Mammary epithelial cell (primary cell): ENCODE measurements at regions of chr14 and their contacts with region 1.

Region 1: GRCh38 chr14:92783816-92784431 is 10.2 kb upstream of the GOLGA5 start:
- DNase-seq: peak; percentile 50
- H3K4me3 ChIP-seq: no peak overlapping the region
- H3K27ac ChIP-seq: no peak overlapping the region
- H3K4me1 ChIP-seq: peaks cover 19% of the 10 kb centered on the region
- H3K27me3 ChIP-seq: no peaks in the 10 kb centered on the region
- CTCF ChIP-seq: peak; percentile 41 to 57

Region 2: GRCh38 chr14:92686900-92687444 is 97.0 kb before region 1 on chr14:
- CTCF ChIA-PET with region 1: no interaction called
- dilution Hi-C with region 1: no loop called
- in situ Hi-C with region 1: no loop called
- intact Hi-C with region 1: loop called (anchors 1 kb)
- DNase-seq: peak; percentile 51
- H3K4me3 ChIP-seq: no peak overlapping the region
- H3K27ac ChIP-seq: no peak overlapping the region
- H3K4me1 ChIP-seq: no peaks in the 10 kb centered on the region
- H3K27me3 ChIP-seq: no peaks in the 10 kb centered on the region
- CTCF ChIP-seq: peak; percentile 59 to 81

Region 3: GRCh38 chr14:92704036-92704804 is 79.7 kb before region 1 on chr14:
- CTCF ChIA-PET with region 1: no interaction called
- dilution Hi-C with region 1: loop called (anchors 5 kb)
- in situ Hi-C with region 1: no loop called
- intact Hi-C with region 1: no loop called
- DNase-seq: no peak
- H3K4me3 ChIP-seq: no peak overlapping the region
- H3K27ac ChIP-seq: no peak overlapping the region
- H3K4me1 ChIP-seq: peaks cover 6% of the 10 kb centered on the region
- H3K27me3 ChIP-seq: no peaks in the 10 kb centered on the region
- CTCF ChIP-seq: no peak

Region 4: GRCh38 chr14:92717571-92718042 is 66.3 kb before region 1 on chr14:
- CTCF ChIA-PET with region 1: no interaction called
- dilution Hi-C with region 1: no loop called
- in situ Hi-C with region 1: loop called (anchors 5 kb)
- intact Hi-C with region 1: loop called (anchors 1 kb)
- DNase-seq: peak; percentile 39
- H3K4me3 ChIP-seq: no peak overlapping the region
- H3K27ac ChIP-seq: no peak overlapping the region
- H3K4me1 ChIP-seq: no peaks in the 10 kb centered on the region
- H3K27me3 ChIP-seq: no peaks in the 10 kb centered on the region
- CTCF ChIP-seq: no peak